A673 (cell line): ENCODE measurements at regions of chr3 and their contacts with region 1.

Region 1: DNA sequence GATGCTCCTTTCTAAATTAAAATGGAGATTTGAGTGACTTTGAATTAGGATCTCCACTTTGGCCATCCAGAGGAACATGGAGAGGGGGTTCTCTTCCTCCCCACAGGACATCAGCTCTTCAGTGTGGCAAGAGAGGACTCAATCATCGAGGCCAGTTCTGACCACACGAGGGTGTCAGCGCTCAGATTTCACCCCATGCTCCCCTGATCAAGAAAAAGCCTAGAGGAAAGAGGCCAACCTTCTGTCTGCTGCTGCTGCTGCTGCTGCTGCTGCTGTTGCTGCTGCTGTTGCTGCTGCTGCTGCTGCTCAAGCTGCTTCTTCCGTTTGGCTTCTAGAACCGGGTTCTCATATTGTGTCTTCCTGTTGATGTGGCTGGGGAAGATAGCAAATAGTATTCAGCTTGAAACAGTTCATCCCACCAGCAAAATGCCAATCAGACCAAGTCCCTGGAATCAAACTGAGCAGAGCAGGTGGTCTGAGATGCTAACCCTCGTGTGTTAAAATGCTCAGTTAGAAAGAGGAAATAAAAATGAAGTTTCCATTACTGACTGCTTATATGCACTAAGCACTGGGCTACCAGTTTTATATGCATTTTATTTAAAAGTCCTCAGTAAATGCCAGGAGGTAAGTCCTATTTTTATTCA is 599.0 kb downstream of the MAGI1 start:
- DNase-seq: peak; percentile 52
- H3K4me3 ChIP-seq: no peak overlapping the region
- H3K27ac ChIP-seq: no peak overlapping the region
- H3K4me1 ChIP-seq: peaks cover 9% of the 10 kb centered on the region
- H3K27me3 ChIP-seq: no peaks in the 10 kb centered on the region
- CTCF ChIP-seq: peak; percentile 30

Region 2: GRCh38 chr3:65425880-65426279 is 13.9 kb before region 1 on chr3:
- CTCF ChIA-PET with region 1: no interaction called
- POLR2A ChIA-PET with region 1: interaction called, 10 read pairs
- intact Hi-C with region 1: no loop called
- DNase-seq: peak; percentile 8
- H3K4me3 ChIP-seq: no peak overlapping the region
- H3K27ac ChIP-seq: no peak overlapping the region
- H3K4me1 ChIP-seq: no peaks in the 10 kb centered on the region
- H3K27me3 ChIP-seq: no peaks in the 10 kb centered on the region
- CTCF ChIP-seq: 0 out of 2 replicates have a peak, but pooled peaks have one; percentile 23

Region 3: DNA sequence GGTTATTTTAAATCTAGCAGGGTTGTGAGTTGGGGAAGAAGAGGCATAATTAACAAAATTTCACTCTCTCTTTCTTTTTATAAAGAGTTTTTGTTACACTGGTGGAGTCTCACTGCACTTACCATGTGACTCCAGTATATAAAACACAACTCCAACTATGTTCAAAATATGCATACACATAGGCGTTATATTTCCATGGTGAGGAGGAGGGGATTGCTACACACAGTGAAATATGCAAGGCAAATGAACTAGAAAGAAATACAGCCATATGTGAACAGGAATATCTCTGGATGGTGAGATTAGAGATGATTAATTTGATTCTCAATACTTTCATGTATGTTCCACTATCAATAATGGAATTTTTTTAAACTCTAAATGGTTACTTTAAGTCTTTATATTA is 214.0 kb after region 1 on chr3:
- CTCF ChIA-PET with region 1: no interaction called
- POLR2A ChIA-PET with region 1: no interaction called
- intact Hi-C with region 1: no loop called
- DNase-seq: no peak
- H3K4me3 ChIP-seq: no peak overlapping the region
- H3K27ac ChIP-seq: no peak overlapping the region
- H3K4me1 ChIP-seq: no peaks in the 10 kb centered on the region
- H3K27me3 ChIP-seq: no peaks in the 10 kb centered on the region
- CTCF ChIP-seq: no peak

Region 4: GRCh38 chr3:65672871-65673815 is 233.4 kb after region 1 on chr3:
- CTCF ChIA-PET with region 1: no interaction called
- POLR2A ChIA-PET with region 1: no interaction called
- intact Hi-C with region 1: loop called (anchors 10 kb)
- DNase-seq: peak; percentile 41
- H3K4me3 ChIP-seq: no peak overlapping the region
- H3K27ac ChIP-seq: no peak overlapping the region
- H3K4me1 ChIP-seq: peaks cover 7% of the 10 kb centered on the region
- H3K27me3 ChIP-seq: no peaks in the 10 kb centered on the region
- CTCF ChIP-seq: peak; percentile 71

Region 5: DNA sequence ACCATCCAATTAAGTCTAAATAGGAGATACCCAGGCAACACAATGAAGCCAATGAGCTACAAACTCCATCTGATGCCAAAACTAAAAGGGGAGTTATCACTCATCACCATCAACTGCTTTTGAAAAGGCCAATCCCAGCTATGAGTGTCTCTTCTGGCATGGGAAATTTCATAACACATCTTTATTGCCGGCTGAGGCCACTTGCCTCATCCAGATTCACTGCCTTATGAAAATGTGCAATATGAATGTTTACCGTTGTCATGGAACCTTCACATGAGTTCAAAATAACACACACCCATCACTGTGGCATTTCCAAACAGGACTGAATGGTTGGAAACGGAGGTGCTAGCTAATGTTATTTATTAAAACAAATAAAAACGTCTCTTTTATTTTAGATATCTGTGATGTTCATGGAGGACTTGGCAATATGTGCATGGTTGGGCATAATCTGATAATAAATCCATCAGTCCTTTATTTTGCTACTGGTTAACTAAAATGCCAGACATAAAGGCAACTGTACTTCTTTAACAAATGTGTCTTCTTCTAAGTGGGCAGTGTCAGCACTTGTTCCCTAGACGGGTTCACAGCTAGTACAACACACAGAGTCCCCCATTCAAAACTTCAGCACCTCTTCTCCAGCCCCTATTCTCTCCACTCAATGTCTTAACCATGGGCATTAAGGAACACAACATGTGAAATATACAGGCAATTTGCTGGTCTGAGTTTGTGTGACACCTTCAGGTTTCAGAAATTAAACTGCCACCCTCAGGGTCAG is 455.1 kb after region 1 on chr3:
- CTCF ChIA-PET with region 1: no interaction called
- POLR2A ChIA-PET with region 1: no interaction called
- intact Hi-C with region 1: no loop called
- DNase-seq: no peak
- H3K4me3 ChIP-seq: no peak overlapping the region
- H3K27ac ChIP-seq: no peak overlapping the region
- H3K4me1 ChIP-seq: no peaks in the 10 kb centered on the region
- H3K27me3 ChIP-seq: no peaks in the 10 kb centered on the region
- CTCF ChIP-seq: no peak